ENCODE measurements at regions of chr14 and their contacts with region 1.

Region 1: GRCh38 chr14:50003213-50004031 is 110.5 kb downstream of the ARF6 start:
- DNase-seq: peak; percentile 89
- H3K4me3 ChIP-seq: peak overlapping the region; percentile 67
- H3K27ac ChIP-seq: peak overlapping the region; percentile 93
- H3K4me1 ChIP-seq: peaks cover 86% of the 10 kb centered on the region
- CTCF ChIP-seq: peak; percentile 38

Region 2: GRCh38 chr14:49862089-49862673 is 141.2 kb before region 1 on chr14:
- CTCF ChIA-PET with region 1: interaction called, 5 read pairs
- POLR2A ChIA-PET with region 1: interaction called, 11 read pairs
- intact Hi-C with region 1: loop called (anchors 1 kb)
- DNase-seq: peak; percentile 89
- H3K4me3 ChIP-seq: peak overlapping the region; percentile 75
- H3K27ac ChIP-seq: peak overlapping the region; percentile 83
- H3K4me1 ChIP-seq: peaks cover 52% of the 10 kb centered on the region
- CTCF ChIP-seq: peak; percentile 100

Region 3: DNA sequence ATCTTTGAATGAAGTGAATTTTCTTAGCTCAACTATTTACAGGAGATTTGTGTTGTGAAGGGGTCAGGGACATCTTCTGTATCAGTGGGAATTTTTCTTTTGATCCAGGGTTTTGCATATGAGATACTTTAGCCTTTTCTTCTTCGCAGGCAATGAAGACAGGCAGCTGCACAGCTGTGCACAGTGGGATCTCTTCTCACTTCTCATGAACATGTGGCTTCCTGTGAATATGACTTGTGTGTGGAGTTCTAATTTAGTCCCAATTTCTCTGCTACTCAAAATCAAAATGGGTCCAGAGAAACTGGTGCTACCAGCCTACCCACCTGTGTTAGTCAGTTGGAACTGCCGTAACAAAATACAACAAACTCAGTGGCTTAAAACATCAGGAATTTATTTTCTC is 72.7 kb before region 1 on chr14:
- CTCF ChIA-PET with region 1: no interaction called
- POLR2A ChIA-PET with region 1: interaction called, 7 read pairs
- intact Hi-C with region 1: loop called (anchors 1 kb)
- DNase-seq: peak; percentile 68
- H3K4me3 ChIP-seq: no peak overlapping the region
- H3K27ac ChIP-seq: peak overlapping the region; percentile 79
- H3K4me1 ChIP-seq: peaks cover 38% of the 10 kb centered on the region
- CTCF ChIP-seq: no peak

Region 4: DNA sequence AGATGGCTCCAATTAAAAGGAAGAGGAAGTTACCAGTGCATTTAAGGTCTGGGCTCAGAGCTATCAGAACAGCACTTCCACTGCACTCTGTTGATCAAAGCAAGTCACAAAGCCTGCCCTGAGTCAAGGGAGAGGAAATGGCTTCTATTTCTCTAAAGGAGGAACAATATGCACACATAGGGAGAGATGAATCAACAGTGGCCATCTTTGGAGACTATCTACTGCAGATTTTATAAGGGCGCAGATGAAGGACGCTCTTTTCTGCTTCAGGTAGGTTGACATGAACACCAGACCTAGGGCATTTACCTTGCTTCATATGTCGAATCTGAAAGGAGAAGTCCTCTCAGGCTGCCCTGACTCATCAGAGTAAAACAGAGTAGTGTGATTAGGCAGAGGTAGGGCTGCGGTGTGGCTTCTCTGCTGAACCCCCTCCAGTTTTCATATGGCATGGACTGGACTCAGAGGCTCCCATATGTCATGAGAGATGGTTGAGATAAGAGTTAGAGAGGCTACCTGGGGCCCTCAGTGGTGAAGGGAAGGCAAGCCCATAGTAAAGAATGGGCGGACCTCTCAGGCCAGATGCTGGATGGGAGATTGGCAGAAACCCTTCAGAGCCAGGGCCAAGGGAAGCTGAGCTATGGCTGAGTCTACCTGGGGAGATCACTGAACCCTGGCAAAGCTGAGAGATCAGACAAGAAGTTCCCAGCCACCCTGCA is 26.1 kb before region 1 on chr14:
- CTCF ChIA-PET with region 1: interaction called, 4 read pairs
- POLR2A ChIA-PET with region 1: interaction called, 261 read pairs
- intact Hi-C with region 1: loop called (anchors 1 kb)
- DNase-seq: peak; percentile 91
- H3K4me3 ChIP-seq: peak overlapping the region; percentile 64
- H3K27ac ChIP-seq: peak overlapping the region; percentile 93
- H3K4me1 ChIP-seq: peaks cover 82% of the 10 kb centered on the region
- CTCF ChIP-seq: no peak

Region 5: DNA sequence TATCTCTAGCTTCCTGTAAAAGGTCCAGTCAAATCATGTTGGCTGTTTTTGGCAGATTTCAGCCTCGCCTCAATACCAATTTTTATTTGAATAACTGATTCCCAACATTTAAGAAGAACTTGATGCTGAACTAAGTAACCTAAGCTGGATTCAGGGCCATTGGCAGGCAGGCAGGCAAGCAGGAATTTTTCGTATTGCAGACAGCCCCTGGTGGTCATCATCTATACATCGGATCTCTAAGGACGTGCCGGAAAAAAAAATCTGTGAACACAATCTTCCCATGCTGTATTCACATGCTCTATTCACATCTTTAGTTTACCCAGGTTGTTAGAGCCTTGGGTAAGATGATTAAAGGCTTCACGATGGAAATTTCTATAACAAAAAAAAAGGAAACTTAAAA is 105.9 kb after region 1 on chr14:
- CTCF ChIA-PET with region 1: no interaction called
- POLR2A ChIA-PET with region 1: no interaction called
- intact Hi-C with region 1: loop called (anchors 5 kb)
- DNase-seq: no peak
- H3K4me3 ChIP-seq: no peak overlapping the region
- H3K27ac ChIP-seq: no peak overlapping the region
- H3K4me1 ChIP-seq: peaks cover 21% of the 10 kb centered on the region
- CTCF ChIP-seq: 0 out of 2 replicates have a peak, but pooled peaks have one; percentile 35

Measured in OCI-LY7 (cell line).